Mammary epithelial cell (primary cell): ENCODE measurements at regions of chr6 and their contacts with region 1.

Region 1: GRCh38 chr6:37018198-37019064 is 13.0 kb downstream of the FGD2 start:
- DNase-seq: peak; percentile 74
- H3K4me3 ChIP-seq: no peak overlapping the region
- H3K27ac ChIP-seq: no peak overlapping the region
- H3K4me1 ChIP-seq: peaks cover 37% of the 10 kb centered on the region
- H3K27me3 ChIP-seq: no peaks in the 10 kb centered on the region
- CTCF ChIP-seq: peak; percentile 93 to 97

Region 2: DNA sequence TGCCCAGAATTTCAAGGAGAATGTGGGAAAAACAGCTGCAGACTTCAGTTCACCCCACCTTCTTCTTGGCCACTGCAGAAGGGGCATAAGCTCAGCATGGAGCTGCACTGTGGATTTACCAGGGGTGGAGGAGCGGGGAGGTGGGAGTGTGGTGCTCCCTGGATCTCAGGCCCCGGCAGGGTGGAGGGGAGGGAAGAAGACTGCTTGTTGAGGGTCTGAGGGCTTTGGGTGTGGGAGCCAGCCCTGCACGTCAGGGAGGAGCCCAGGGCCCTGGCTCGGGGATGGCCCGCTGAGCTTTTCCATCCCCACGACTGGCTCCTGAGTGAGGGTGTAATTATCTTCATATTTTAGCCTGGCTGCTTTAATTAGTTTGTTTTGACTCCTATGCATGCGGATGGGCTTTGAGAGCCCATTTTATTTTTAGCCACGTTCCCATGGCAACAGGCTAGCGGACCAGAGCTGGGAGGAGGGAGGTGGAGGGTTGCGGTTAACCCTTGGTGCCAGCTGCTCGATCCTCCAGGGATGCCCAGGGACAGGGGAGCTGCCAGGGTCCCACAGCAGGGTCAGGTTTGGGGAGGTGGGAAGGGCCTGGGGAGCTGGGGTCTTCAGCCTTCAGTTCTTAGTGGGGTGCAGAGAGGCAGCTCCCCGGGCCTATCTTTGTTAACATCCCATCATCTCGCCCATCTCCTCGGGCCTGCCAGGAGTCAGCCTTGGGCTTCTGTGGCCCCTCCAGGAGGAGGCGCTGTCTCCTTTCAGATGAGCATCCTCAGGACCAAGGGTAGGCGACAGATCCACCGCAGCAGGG is 252.6 kb before region 1 on chr6:
- CTCF ChIA-PET with region 1: interaction called, 7 read pairs
- dilution Hi-C with region 1: no loop called
- in situ Hi-C with region 1: no loop called
- intact Hi-C with region 1: loop called (anchors 1 kb)
- DNase-seq: peak; percentile 63
- H3K4me3 ChIP-seq: no peak overlapping the region
- H3K27ac ChIP-seq: no peak overlapping the region
- H3K4me1 ChIP-seq: peaks cover 21% of the 10 kb centered on the region
- H3K27me3 ChIP-seq: no peaks in the 10 kb centered on the region
- CTCF ChIP-seq: peak; percentile 94 to 98

Region 3: GRCh38 chr6:36874443-36875249 is 143.8 kb before region 1 on chr6 and contains the start of gene PPIL1:
- CTCF ChIA-PET with region 1: interaction called, 13 read pairs
- dilution Hi-C with region 1: no loop called
- in situ Hi-C with region 1: no loop called
- intact Hi-C with region 1: no loop called
- DNase-seq: peak; percentile 88
- H3K4me3 ChIP-seq: peak within 1 kb of the TSS; percentile 61 to 78 (median 76)
- H3K27ac ChIP-seq: peak within 1 kb of the TSS; percentile 95
- H3K4me1 ChIP-seq: peaks cover 15% of the 10 kb centered on the region
- H3K27me3 ChIP-seq: no peaks in the 10 kb centered on the region
- CTCF ChIP-seq: no peak
- total RNA-seq, gene PPIL1: 24.0 to 33.5 TPM

Region 4: DNA sequence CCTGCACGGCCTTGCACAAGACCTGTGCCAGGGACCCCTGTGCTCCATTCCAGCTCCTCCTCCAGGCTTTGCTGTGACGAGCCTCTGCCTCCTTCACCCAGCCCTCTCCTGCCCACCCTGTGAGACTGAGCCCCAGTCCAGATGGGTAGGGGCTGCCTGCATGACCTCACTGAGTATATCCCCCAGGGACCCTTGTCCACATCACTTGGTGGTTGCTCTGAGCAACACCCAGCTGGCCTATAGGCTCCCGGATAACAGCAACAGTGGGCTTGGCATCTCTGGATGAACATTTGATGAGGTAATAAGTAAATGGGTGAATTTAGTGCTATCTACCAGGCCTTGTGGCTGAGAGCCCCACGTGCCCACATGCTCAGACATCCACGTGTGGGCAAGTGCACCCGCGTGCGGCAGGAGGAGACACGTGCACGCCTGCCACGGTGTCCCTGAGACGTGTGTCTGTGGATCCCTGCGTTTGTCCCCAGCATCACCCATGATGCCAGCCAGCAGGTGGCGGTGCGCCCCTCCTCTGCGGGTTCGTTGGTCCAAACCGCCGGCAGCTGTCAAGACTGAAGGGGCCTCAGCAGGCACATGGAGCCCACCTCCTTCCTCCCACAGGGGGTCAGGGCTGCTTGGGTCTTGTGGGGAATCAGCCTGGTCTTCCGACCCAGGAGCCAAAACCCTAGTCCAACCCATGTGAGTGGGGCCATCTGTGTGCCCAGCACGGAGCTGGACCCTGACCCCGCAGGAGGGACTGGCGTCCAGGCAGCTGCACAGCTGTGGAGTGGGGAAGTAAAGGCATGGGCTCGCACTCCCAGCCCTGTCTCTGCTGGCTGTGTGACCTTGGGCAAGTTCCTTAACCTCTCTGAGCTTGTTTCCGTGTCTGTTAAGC is 33.0 kb after region 1 on chr6:
- CTCF ChIA-PET with region 1: interaction called, 6 read pairs
- dilution Hi-C with region 1: no loop called
- in situ Hi-C with region 1: loop called in 1 of 2 experiments (anchors 5 kb)
- intact Hi-C with region 1: loop called (anchors 1 kb)
- DNase-seq: peak; percentile 65
- H3K4me3 ChIP-seq: no peak overlapping the region
- H3K27ac ChIP-seq: no peak overlapping the region
- H3K4me1 ChIP-seq: peaks cover 36% of the 10 kb centered on the region
- H3K27me3 ChIP-seq: no peaks in the 10 kb centered on the region
- CTCF ChIP-seq: peak; percentile 65 to 96

Region 5: GRCh38 chr6:37177077-37177934 is 158.9 kb after region 1 on chr6:
- CTCF ChIA-PET with region 1: interaction called, 5 read pairs
- dilution Hi-C with region 1: loop called (anchors 5 kb)
- in situ Hi-C with region 1: loop called (anchors 10 kb)
- intact Hi-C with region 1: loop called (anchors 1 kb)
- DNase-seq: no peak
- H3K4me3 ChIP-seq: no peak overlapping the region
- H3K27ac ChIP-seq: no peak overlapping the region
- H3K4me1 ChIP-seq: peaks cover 4% of the 10 kb centered on the region
- H3K27me3 ChIP-seq: no peaks in the 10 kb centered on the region
- CTCF ChIP-seq: no peak

Region 6: GRCh38 chr6:37314487-37315156 is 296.2 kb after region 1 on chr6:
- CTCF ChIA-PET with region 1: no interaction called
- dilution Hi-C with region 1: no loop called
- in situ Hi-C with region 1: no loop called
- intact Hi-C with region 1: loop called (anchors 1 kb)
- DNase-seq: peak; percentile 50
- H3K4me3 ChIP-seq: no peak overlapping the region
- H3K27ac ChIP-seq: no peak overlapping the region
- H3K4me1 ChIP-seq: peaks cover 3% of the 10 kb centered on the region
- H3K27me3 ChIP-seq: no peaks in the 10 kb centered on the region
- CTCF ChIP-seq: peak; percentile 64 to 73

Region 7: DNA sequence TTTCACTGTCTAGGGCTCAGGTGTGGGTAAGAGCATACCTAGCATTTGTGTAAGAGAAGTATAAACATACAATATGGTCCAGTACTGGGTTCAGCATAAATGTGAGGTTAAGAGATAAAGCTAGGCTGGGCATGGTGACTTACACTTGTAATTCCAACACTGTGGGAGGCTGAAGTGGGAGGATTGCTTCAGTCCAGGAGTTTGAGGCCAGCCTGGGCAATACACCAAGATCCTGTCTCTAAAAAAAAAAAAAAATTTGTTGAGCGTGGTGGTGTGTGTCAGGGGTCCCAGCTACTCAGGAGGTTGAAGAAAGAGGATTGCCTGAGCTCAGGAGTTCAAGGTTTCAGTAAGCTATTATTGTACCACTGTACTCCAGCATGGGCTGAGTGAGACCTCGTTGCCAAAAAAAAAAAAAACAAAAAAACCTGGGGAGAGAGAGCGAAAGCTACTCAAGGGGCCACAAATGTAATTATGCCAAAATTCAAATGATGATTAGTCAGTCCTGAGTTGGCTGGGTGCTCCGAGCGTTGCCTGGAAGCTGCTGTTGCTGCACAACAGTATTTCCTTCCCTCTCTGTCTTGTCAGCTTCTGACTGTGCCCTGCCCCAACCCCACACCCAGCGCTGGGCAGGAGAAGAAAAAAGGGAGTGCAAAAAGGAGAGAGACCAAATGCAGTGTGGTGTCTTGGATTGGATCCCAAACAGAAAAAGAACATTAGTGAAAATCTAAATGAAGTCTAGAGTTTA is 438.6 kb after region 1 on chr6:
- CTCF ChIA-PET with region 1: no interaction called
- dilution Hi-C with region 1: no loop called
- in situ Hi-C with region 1: no loop called
- intact Hi-C with region 1: no loop called
- DNase-seq: no peak
- H3K4me3 ChIP-seq: no peak overlapping the region
- H3K27ac ChIP-seq: peak overlapping the region; percentile 30
- H3K4me1 ChIP-seq: peaks cover 11% of the 10 kb centered on the region
- H3K27me3 ChIP-seq: no peaks in the 10 kb centered on the region
- CTCF ChIP-seq: no peak